CD4-positive, alpha-beta T cell (primary cell): ENCODE measurements at regions of chr4 and their contacts with region 1.

Region 1: GRCh38 chr4:14994241-14994640 is 8.0 kb upstream of the CPEB2 start:
- DNase-seq: peak in 2 of 14 experiments; percentile 47 to 51
- ATAC-seq: no peak
- H3K4me3 ChIP-seq: no peak overlapping the region
- H3K4me3 Mint-ChIP-seq: no peak overlapping the region
- H3K27ac ChIP-seq: no peak overlapping the region
- H3K27ac Mint-ChIP-seq: no peak overlapping the region
- H3K4me1 ChIP-seq: no peaks in the 10 kb centered on the region
- H3K4me1 Mint-ChIP-seq: no peaks in the 10 kb centered on the region
- H3K27me3 ChIP-seq: no peaks in the 10 kb centered on the region
- H3K27me3 Mint-ChIP-seq: peaks cover 7% of the 10 kb centered on the region
- CTCF ChIP-seq: no peak

Region 2: GRCh38 chr4:13656569-13657405 is 1337.5 kb before region 1 on chr4:
- CTCF ChIA-PET with region 1: no interaction called
- POLR2A ChIA-PET with region 1: no interaction called
- intact Hi-C with region 1: no loop called
- DNase-seq: peak; percentile 31 to 82 (median 48)
- ATAC-seq: peak; percentile 49
- H3K4me3 ChIP-seq: peak overlapping the region; percentile 44
- H3K4me3 Mint-ChIP-seq: peak overlapping the region; percentile 67
- H3K27ac ChIP-seq: no peak overlapping the region
- H3K27ac Mint-ChIP-seq: no peak overlapping the region
- H3K4me1 ChIP-seq: peaks cover 6% of the 10 kb centered on the region
- H3K4me1 Mint-ChIP-seq: peaks cover 18% of the 10 kb centered on the region
- H3K27me3 ChIP-seq: no peaks in the 10 kb centered on the region
- H3K27me3 Mint-ChIP-seq: peaks cover 4% of the 10 kb centered on the region
- CTCF ChIP-seq: peak; percentile 84

Region 3: DNA sequence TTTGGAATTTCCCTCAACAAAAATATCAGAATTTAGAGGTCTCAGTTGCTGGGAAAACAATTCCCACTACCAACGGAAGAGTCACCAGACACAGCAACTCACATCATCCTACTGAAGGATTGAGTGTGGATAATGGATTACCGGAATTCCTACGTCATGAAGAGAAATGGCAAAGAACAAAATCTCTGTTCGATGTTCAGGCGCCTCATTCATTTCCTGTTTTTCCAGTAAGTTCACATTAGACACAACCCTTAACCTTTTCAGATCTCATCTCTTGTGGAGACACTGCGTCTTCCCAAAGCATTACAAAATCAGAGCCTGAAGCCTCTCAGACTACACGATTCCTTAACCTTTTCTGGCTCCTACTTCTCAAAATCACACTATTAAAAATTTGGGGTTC is 50.5 kb before region 1 on chr4:
- CTCF ChIA-PET with region 1: no interaction called
- POLR2A ChIA-PET with region 1: no interaction called
- intact Hi-C with region 1: no loop called
- DNase-seq: no peak
- ATAC-seq: no peak
- H3K4me3 ChIP-seq: no peak overlapping the region
- H3K4me3 Mint-ChIP-seq: no peak overlapping the region
- H3K27ac ChIP-seq: no peak overlapping the region
- H3K27ac Mint-ChIP-seq: no peak overlapping the region
- H3K4me1 ChIP-seq: no peaks in the 10 kb centered on the region
- H3K4me1 Mint-ChIP-seq: no peaks in the 10 kb centered on the region
- H3K27me3 ChIP-seq: peaks cover 0 to 6% of the 10 kb centered on the region in 2 experiments
- H3K27me3 Mint-ChIP-seq: peaks cover 34% of the 10 kb centered on the region
- CTCF ChIP-seq: no peak

Region 4: GRCh38 chr4:15396157-15396800 is 402.0 kb after region 1 on chr4:
- CTCF ChIA-PET with region 1: no interaction called
- POLR2A ChIA-PET with region 1: no interaction called
- intact Hi-C with region 1: loop called in 1 of 2 experiments (anchors 10 kb)
- DNase-seq: peak; percentile 5 to 71 (median 38)
- ATAC-seq: peak; percentile 80
- H3K4me3 ChIP-seq: no peak overlapping the region
- H3K4me3 Mint-ChIP-seq: no peak overlapping the region
- H3K27ac ChIP-seq: no peak overlapping the region
- H3K27ac Mint-ChIP-seq: no peak overlapping the region
- H3K4me1 ChIP-seq: peaks cover 24% of the 10 kb centered on the region
- H3K4me1 Mint-ChIP-seq: peaks cover 35% of the 10 kb centered on the region
- H3K27me3 ChIP-seq: no peaks in the 10 kb centered on the region
- H3K27me3 Mint-ChIP-seq: no peaks in the 10 kb centered on the region
- CTCF ChIP-seq: peak; percentile 78